Activated naive CD4-positive, alpha-beta T cell treated with anti-CD3 and anti-CD28 coated beads for 36 hours (primary cell): ENCODE measurements at regions of chr17 and their contacts with region 1.

Region 1: DNA sequence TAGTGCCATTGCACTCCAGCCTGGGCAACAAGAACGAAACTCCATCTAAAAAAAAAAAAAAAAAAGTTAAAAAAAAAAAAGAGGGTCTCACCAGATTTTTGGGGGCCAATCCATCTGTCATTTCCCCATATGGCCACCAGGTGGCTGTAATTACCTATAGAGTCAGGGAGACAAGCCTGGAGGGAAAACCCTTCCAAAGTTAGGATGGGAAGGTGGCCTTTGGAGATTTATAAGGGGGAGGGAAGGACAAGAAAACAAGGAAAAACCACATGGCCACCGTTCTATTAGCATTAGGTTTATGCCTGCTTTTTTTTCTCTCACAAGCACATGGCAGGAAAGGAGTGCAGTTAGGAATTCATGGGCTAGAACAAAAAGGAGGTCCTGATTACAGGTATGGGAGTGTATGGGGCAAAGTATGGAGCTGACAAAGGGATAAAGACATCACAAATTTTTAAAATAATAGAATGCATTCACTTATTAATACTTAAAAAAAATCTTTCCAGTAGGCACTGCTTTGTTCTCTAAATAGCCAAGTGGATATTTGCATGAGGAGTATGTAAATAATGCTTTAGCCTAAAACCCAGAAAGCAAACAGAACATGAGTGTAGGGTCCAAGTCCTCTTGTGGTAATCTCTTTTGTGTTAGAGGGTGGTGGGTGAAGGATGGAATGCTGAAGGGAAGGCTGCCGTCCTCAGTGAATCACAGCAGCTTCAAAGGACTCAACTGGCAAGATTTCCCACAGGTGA is 5.1 kb downstream of the CYB5D1 start:
- DNase-seq: peak; percentile 56
- H3K4me3 Mint-ChIP-seq: no peak overlapping the region
- H3K27ac Mint-ChIP-seq: no peak overlapping the region
- H3K4me1 Mint-ChIP-seq: peaks cover 11% of the 10 kb centered on the region
- H3K27me3 Mint-ChIP-seq: no peaks in the 10 kb centered on the region

Region 2: DNA sequence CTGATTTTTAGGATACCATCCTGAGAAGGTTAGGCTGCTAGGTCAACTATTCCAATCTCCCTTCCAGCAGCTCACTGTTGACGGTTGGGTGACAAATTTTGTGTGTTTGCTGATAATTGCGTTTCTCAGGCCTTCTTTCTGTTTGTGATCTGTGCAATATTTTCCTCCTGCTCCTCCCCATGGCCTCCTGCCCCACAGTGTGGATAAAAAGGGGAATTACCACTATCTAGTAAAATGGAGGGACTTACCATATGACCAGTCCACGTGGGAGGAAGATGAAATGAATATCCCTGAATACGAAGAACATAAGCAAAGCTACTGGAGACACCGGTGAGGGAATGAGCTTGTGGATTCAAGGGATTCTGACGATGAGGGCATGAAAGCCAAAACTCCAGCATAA is 34.9 kb after region 1 on chr17:
- CTCF ChIA-PET with region 1: interaction called, 14 read pairs
- intact Hi-C with region 1: no loop called
- DNase-seq: peak; percentile 18
- H3K4me3 Mint-ChIP-seq: no peak overlapping the region
- H3K27ac Mint-ChIP-seq: peak overlapping the region; percentile 60
- H3K4me1 Mint-ChIP-seq: peaks cover 15% of the 10 kb centered on the region
- H3K27me3 Mint-ChIP-seq: no peaks in the 10 kb centered on the region